Activated B cell treated with CpG ODN at 0.5 μM for 24 hours (primary cell): ENCODE measurements at regions of chr7 and their contacts with region 1.

Region 1: DNA sequence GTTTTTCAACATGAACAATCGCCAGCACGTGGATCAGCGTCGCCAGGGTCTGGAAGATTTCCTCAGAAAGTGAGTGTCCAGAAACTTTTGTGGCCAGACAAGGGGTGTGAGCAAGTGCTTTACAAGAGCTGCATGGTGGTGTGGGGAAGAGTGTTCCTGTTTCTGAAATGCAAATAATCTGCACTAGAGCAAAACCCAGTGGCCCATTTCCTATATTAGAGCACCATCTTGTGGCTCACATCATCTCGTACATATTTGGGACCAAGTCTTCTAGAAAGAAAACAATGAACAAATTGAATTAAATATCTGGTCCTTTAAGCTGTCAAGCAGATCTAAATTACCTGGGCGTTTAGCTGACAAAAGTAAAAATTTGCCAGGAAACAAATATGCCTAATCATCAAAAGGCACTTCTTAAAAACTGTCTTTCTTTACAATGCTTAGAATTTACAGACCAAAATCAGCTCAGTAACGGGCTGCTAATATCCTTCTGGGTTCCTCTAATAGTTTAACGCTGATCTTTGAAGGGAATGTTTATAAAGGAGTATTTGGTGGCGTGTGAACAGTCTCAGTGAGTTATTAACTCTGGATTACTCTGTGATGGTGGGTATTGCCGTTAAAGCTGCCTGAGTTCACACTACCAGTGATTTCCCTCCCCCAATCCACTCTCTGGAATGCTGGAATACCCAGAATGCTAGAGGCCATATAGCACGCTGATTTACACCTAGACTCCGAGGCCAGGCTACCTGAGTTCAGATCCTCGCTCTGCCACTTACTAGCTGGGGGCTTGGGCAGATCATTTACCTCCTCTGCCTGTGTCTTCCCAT is 73.6 kb downstream of the SNX10 start:
- DNase-seq: no peak
- ATAC-seq: peak; percentile 89
- H3K4me3 Mint-ChIP-seq: no peak overlapping the region
- H3K27ac Mint-ChIP-seq: peak overlapping the region; percentile 85
- H3K4me1 Mint-ChIP-seq: peaks cover 46% of the 10 kb centered on the region
- H3K27me3 Mint-ChIP-seq: no peaks in the 10 kb centered on the region
- CTCF ChIP-seq: peak; percentile 52

Region 2: GRCh38 chr7:25894902-25895791 is 470.1 kb before region 1 on chr7:
- CTCF ChIA-PET with region 1: interaction called, 146 read pairs
- POLR2A ChIA-PET with region 1: interaction called, 10 read pairs
- intact Hi-C with region 1: loop called (anchors 1 kb)
- DNase-seq: peak; percentile 77
- ATAC-seq: peak; percentile 88
- H3K4me3 Mint-ChIP-seq: peak overlapping the region; percentile 75
- H3K27ac Mint-ChIP-seq: peak overlapping the region; percentile 62
- H3K4me1 Mint-ChIP-seq: peaks cover 32% of the 10 kb centered on the region
- H3K27me3 Mint-ChIP-seq: peaks cover 38% of the 10 kb centered on the region
- CTCF ChIP-seq: peak; percentile 36

Region 3: DNA sequence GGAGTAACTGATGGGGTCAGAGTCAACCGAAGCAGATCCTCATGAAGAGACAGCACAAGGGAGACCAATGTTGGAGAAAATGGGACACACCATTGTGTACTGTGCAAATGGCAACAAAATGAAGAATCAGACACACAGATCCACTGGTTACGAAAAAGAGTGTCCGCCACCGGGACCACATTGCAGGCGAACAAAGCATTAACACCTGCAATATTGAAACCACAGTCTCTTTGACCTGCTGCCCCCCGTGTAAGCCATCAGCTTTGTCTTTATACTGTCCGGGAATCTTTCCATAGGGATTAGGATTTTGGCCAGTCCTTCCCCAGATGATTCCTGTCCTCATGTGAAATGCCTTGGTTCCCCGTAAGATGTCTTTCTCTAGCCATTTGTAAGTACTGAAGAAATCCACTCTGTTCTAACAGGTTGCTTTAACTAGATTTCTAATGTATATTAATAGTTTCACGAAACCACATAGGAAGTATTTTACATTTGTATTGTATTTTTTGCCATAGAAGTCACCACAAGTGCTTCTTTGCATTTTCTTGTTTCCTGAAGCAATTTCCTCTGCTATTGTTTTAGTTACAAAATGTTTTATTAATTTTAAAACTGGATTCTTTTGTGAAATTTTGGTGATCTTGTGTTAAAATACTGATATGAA is 354.1 kb before region 1 on chr7:
- CTCF ChIA-PET with region 1: no interaction called
- POLR2A ChIA-PET with region 1: no interaction called
- intact Hi-C with region 1: no loop called
- DNase-seq: no peak
- ATAC-seq: no peak
- H3K4me3 Mint-ChIP-seq: no peak overlapping the region
- H3K27ac Mint-ChIP-seq: no peak overlapping the region
- H3K4me1 Mint-ChIP-seq: peaks cover 18% of the 10 kb centered on the region
- H3K27me3 Mint-ChIP-seq: peaks cover 59% of the 10 kb centered on the region
- CTCF ChIP-seq: no peak

Region 4: DNA sequence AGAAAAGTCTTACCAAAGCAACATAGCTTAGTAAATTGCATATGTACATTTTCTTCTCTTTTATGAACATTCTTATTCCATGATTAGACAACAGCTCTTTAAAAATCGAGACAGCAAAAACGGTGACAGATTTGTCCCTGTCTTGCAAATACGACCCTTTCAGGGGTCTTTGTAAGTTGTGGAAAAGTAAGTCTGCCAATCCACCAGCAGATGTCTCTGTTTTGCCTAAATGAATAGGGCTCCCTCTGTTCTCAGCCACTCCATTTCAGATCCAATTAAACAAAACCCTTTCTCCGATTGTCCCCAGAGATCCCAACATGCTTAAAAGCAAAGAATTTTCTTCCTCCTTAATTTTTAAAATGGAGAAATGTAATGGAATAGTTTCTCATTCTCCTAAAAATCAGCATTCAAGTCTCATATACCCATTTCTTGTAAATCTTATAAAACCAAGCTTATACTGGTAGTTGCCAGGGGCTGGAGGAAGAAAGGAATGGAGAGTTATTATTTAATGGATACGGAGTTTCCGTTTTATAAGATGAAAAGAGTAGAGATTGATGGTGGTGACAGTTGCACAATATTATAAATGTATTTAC is 274.3 kb before region 1 on chr7:
- CTCF ChIA-PET with region 1: interaction called, 83 read pairs
- POLR2A ChIA-PET with region 1: interaction called, 9 read pairs
- intact Hi-C with region 1: loop called (anchors 1 kb)
- DNase-seq: no peak
- ATAC-seq: peak; percentile 45
- H3K4me3 Mint-ChIP-seq: peak overlapping the region; percentile 7
- H3K27ac Mint-ChIP-seq: no peak overlapping the region
- H3K4me1 Mint-ChIP-seq: peaks cover 27% of the 10 kb centered on the region
- H3K27me3 Mint-ChIP-seq: no peaks in the 10 kb centered on the region
- CTCF ChIP-seq: peak; percentile 42

Region 5: DNA sequence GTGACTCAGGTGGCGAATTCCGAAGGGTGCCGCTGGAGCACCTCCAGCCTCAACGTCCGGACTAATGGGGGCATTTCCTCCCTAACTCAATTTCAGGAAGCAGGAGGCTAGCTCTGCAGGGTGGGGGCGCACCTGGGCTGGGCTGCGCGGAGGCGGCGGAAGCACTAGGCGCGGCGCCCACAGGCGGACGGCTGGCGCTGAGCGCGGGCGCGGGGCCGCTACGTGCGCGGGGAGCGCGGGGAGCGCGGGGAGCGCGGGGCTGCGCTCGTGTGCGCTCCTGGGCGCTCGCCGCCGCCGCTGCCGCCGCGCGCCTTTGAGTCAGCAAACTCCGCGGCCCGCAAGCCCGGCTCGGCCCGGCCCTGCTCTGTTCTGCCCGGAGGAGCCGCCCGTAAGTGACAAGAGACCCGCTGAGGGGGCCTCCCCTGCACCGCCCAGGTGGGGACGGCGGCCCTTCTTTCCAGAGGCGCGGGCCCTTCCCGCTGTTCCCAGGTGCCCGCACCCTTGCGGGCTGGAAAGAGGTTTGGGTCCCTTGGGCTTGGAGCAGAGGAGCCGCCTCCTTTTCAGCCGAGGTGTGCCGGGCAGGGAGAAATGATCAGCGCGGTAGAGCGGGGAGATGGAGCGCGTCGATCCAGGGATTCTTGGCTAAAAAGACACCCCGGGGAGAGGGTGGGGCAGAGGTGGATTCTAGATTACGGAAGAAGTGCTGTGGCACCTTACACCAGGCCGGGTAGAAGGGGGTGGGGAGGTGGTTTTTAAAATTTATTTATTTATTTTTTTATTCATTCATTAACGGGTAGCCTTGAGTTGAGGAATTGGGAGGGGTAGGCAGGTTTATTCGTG is 73.4 kb before region 1 on chr7 and contains the start of gene SNX10:
- CTCF ChIA-PET with region 1: interaction called, 57 read pairs
- POLR2A ChIA-PET with region 1: interaction called, 16 read pairs
- intact Hi-C with region 1: loop called (anchors 1 kb)
- DNase-seq: peak; percentile 76
- ATAC-seq: peak; percentile 77
- H3K4me3 Mint-ChIP-seq: peak within 1 kb of the TSS; percentile 92
- H3K27ac Mint-ChIP-seq: peak within 1 kb of the TSS; percentile 95
- H3K4me1 Mint-ChIP-seq: peaks cover 51% of the 10 kb centered on the region
- H3K27me3 Mint-ChIP-seq: no peaks in the 10 kb centered on the region
- CTCF ChIP-seq: no peak
- total RNA-seq, gene SNX10: 28.9 and 32.3 TPM in 2 replicates

Region 6: DNA sequence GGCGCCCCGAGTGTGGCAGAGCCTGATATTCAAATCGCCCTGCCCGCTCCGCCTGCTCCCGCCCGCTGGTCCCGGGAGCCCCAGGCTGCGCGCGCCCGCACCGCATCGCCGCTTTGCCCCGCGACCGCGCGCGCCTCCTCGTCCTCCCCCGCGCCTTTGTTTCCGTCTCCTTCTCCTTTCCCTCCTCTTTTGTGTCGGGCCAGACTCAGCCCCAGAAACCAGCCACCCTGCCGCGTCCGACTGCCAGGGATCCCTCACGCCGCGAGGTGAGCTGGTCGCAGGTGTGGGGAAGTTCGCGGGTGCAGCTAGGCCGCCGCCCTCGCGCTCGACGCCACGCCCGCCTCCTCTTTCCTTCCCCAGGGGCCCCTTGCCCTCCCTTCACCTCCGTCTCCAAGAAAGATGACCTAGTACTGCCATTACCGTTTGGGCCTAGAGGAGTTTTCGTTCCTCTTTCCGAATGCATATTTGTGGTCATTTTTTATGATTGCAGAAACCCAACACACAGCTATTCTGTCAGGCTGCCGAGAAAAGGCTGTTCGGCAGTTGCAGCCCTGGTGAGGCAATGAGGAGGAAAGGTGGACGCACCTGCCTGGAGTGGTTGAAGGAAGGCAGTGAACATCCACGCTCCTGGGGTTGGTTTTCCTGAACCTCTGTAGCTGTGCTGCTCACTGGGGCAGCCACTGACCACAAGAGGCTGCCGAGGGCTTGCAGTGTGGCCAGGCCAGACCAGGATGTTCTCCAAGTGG is 33.6 kb after region 1 on chr7:
- CTCF ChIA-PET with region 1: interaction called, 13 read pairs
- POLR2A ChIA-PET with region 1: interaction called, 3 read pairs
- intact Hi-C with region 1: no loop called
- DNase-seq: peak; percentile 83
- ATAC-seq: peak; percentile 89
- H3K4me3 Mint-ChIP-seq: peak overlapping the region; percentile 98
- H3K27ac Mint-ChIP-seq: peak overlapping the region; percentile 98
- H3K4me1 Mint-ChIP-seq: peaks cover 36% of the 10 kb centered on the region
- H3K27me3 Mint-ChIP-seq: no peaks in the 10 kb centered on the region
- CTCF ChIP-seq: no peak

Region 7: DNA sequence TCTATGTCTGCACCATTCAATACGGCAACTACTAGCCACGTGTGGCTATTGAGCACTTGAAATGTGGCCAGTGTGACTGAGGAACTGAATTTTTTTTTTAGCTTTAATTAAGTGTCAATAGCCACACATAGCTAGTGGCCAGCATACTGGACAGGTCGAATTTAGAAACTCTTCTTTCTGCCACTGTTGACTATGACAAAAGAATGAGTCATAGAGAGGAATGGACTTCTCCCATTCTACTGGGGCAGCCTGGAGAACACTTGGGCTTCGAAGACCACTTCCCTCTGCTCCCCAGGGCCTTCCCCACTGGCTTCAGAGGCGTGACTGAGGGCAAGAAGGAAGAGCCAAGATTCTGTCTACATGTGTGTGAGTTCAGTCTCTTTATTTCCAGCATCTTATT is 63.9 kb after region 1 on chr7:
- CTCF ChIA-PET with region 1: no interaction called
- POLR2A ChIA-PET with region 1: no interaction called
- intact Hi-C with region 1: no loop called
- DNase-seq: no peak
- ATAC-seq: no peak
- H3K4me3 Mint-ChIP-seq: no peak overlapping the region
- H3K27ac Mint-ChIP-seq: no peak overlapping the region
- H3K4me1 Mint-ChIP-seq: no peaks in the 10 kb centered on the region
- H3K27me3 Mint-ChIP-seq: peaks cover 5% of the 10 kb centered on the region
- CTCF ChIP-seq: no peak

Region 8: GRCh38 chr7:26686448-26686981 is 321.2 kb after region 1 on chr7:
- CTCF ChIA-PET with region 1: interaction called, 16 read pairs
- POLR2A ChIA-PET with region 1: no interaction called
- intact Hi-C with region 1: no loop called
- DNase-seq: no peak
- ATAC-seq: no peak
- H3K4me3 Mint-ChIP-seq: no peak overlapping the region
- H3K27ac Mint-ChIP-seq: no peak overlapping the region
- H3K4me1 Mint-ChIP-seq: peaks cover 28% of the 10 kb centered on the region
- H3K27me3 Mint-ChIP-seq: no peaks in the 10 kb centered on the region
- CTCF ChIP-seq: peak; percentile 61

Region 9: DNA sequence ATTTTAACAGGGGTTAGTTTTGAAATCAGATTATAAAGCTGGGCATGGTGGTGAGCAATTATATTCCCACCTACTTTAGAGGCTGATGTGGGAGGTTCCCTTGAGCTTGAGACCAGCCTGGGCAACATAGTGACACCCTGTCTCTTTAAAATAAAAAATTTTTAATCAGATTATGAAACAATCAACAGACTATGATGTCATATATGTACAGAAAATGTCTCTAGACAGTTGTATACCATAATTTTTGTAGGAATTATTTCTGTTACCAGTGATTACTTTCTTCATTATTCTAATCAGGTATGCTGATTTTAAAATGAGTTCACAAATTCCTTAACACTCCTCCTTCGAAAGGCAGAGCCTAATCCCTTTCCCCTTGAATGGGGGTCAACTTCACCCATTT is 439.8 kb after region 1 on chr7:
- CTCF ChIA-PET with region 1: no interaction called
- POLR2A ChIA-PET with region 1: no interaction called
- intact Hi-C with region 1: no loop called
- DNase-seq: no peak
- ATAC-seq: no peak
- H3K4me3 Mint-ChIP-seq: no peak overlapping the region
- H3K27ac Mint-ChIP-seq: no peak overlapping the region
- H3K4me1 Mint-ChIP-seq: peaks cover 3% of the 10 kb centered on the region
- H3K27me3 Mint-ChIP-seq: no peaks in the 10 kb centered on the region
- CTCF ChIP-seq: no peak